ENCODE measurements at regions of chr17 and their contacts with region 1.

Region 1: DNA sequence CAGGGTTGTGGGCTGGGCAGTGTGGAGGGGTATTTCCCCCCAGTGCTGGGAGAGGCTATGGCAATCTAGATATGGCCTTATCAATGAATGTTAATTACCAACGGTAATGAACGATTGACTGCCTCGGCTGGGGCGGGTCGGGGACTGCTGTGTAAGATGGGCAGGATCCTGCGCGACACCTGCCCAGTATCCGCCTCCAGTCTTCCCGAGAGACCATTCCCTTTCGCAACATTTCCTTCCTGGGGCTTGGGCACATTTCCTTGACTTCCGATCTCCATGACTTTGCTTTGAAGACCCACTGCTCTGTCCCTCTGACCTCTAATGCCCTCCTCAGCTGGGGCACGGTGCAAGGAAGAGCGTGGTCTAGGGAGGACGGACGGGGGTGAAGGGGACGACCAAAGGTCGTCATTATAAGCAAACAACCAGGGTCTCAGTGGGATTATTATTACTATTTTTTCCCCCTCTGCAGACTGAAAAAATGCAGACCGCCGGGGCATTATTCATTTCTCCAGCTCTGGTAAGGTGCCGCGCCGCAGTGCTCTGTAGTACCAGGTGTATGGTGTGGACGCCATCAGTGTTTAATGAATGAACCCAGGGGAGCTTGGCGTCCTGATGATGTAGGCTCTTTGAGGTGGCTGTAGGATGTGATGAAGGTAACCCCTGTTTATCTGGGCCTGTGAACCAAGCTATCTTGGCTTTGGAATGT is 506 bp downstream of the ATP5MC1 start:
- DNase-seq: no peak
- ATAC-seq: peak in 1 of 2 donors; percentile 11
- H3K4me3 ChIP-seq: peak overlapping the region; percentile 66 to 88 (median 76)
- H3K27ac ChIP-seq: peak overlapping the region; percentile 85 to 95 (median 92)
- H3K4me1 ChIP-seq: peaks cover 17 to 22% of the 10 kb centered on the region in 2 donors
- H3K27me3 ChIP-seq: no peaks in the 10 kb centered on the region
- CTCF ChIP-seq: no peak
- POLR2A ChIP-seq: no peak

Region 2: GRCh38 chr17:48671697-48672171 is 221.4 kb before region 1 on chr17:
- in situ Hi-C with region 1: loop called in 3 of 4 experiments (anchors 5 to 25 kb)
- intact Hi-C with region 1: no loop called
- DNase-seq: peak; percentile 50 to 61
- ATAC-seq: peak; percentile 84 to 92
- H3K4me3 ChIP-seq: peak overlapping the region; percentile 35 to 57 (median 48)
- H3K27ac ChIP-seq: no peak overlapping the region
- H3K4me1 ChIP-seq: no peaks in the 10 kb centered on the region
- H3K27me3 ChIP-seq: peaks cover 0 to 25% (median 15%) of the 10 kb centered on the region in 3 donors
- CTCF ChIP-seq: peak; percentile 69 to 91 (median 81)
- POLR2A ChIP-seq: no peak

Region 3: DNA sequence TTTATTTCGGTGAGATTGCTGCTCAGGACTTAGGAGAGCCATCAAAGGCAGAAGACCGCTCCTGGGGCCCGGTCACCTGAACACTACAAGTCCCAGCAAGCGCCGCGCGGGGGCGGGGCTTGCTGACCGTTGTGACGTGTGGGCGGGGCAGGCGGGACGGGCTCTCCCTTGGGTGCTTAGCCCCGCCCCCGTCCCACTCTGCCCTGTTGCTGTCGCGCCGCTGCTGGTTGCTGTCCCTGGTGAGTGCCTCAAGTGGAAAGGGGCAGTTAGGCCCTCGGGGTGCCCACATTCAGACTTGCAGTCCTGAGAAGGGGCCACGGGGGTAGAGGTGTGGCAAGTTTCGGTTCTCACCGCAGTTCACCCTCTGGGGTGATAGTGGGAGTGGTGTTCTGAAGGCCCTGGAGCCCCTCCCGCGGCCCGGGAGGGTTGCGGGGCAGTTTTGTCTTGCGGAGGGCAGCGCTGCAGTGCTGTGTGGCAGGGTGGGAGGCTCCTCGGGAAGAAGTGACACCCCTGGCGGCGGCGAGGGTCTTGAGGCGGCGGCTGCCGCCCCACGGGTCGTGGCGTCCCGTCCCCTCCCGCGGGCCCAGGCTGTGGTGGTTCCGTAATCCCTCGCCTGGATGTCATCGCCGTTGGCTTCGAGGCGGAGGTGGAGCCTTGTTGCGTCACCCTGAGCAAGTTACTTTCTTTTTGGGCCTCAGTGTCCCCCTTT is 62.1 kb before region 1 on chr17 and contains the start of gene CALCOCO2:
- in situ Hi-C with region 1: no loop called
- intact Hi-C with region 1: loop called (anchors 1 kb)
- DNase-seq: peak; percentile 93 to 94
- ATAC-seq: peak; percentile 93 to 95
- H3K4me3 ChIP-seq: peak within 1 kb of the TSS; percentile 90 to 95 (median 92)
- H3K27ac ChIP-seq: peak within 1 kb of the TSS; percentile 98 to 99 (median 98)
- H3K4me1 ChIP-seq: peaks cover 43 to 47% of the 10 kb centered on the region in 2 donors
- H3K27me3 ChIP-seq: no peaks in the 10 kb centered on the region
- CTCF ChIP-seq: peak in 4 of 5 experiments; percentile 9 to 13 (median 10)
- POLR2A ChIP-seq: peak; percentile 93 to 96
- total RNA-seq, gene CALCOCO2: 104 to 237 (median 132) TPM

Region 4: DNA sequence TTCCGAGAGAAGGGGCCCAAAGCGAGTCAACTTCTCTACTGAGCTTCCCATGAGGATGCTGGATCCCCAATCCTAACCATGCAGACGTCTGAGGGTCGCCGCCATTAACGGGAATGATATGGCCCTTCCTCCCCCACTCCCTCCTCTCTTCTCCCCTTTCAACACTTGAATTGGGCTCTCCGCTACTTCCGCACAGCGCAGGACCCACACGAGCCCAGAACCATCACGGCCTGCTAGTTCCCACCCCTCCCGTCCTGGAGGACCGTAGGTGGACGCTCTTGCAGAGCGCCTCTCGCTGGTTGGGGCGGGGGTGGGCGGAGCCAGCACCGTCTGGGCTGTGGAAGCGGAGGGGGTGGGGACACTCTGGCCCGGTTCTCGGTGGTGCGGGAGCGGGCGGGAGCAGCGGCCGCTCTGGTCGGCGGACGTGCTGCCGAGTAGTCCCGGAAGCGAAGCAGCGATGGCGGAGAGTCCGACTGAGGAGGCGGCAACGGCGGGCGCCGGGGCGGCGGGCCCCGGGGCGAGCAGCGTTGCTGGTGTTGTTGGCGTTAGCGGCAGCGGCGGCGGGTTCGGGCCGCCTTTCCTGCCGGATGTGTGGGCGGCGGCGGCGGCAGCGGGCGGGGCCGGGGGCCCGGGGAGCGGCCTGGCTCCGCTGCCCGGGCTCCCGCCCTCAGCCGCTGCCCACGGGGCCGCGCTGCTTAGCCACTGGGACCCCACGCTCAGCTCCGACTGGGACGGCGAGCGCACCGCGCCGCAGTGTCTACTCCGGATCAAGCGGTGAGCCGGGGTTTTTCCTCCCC is 15.2 kb after region 1 on chr17 and contains the start of gene UBE2Z:
- in situ Hi-C with region 1: no loop called
- intact Hi-C with region 1: loop called (anchors 1 kb)
- DNase-seq: peak; percentile 88 to 93
- ATAC-seq: peak; percentile 96 to 98
- H3K4me3 ChIP-seq: peak within 1 kb of the TSS; percentile 68 to 82 (median 70)
- H3K27ac ChIP-seq: peak within 1 kb of the TSS; percentile 78 to 86 (median 84)
- H3K4me1 ChIP-seq: peaks cover 19 to 22% of the 10 kb centered on the region in 2 donors
- H3K27me3 ChIP-seq: no peaks in the 10 kb centered on the region
- CTCF ChIP-seq: peak in 2 of 5 experiments; percentile 11 to 23
- POLR2A ChIP-seq: peak; percentile 86 to 88
- total RNA-seq, gene UBE2Z: 32.7 to 41.1 (median 35.4) TPM

Region 5: DNA sequence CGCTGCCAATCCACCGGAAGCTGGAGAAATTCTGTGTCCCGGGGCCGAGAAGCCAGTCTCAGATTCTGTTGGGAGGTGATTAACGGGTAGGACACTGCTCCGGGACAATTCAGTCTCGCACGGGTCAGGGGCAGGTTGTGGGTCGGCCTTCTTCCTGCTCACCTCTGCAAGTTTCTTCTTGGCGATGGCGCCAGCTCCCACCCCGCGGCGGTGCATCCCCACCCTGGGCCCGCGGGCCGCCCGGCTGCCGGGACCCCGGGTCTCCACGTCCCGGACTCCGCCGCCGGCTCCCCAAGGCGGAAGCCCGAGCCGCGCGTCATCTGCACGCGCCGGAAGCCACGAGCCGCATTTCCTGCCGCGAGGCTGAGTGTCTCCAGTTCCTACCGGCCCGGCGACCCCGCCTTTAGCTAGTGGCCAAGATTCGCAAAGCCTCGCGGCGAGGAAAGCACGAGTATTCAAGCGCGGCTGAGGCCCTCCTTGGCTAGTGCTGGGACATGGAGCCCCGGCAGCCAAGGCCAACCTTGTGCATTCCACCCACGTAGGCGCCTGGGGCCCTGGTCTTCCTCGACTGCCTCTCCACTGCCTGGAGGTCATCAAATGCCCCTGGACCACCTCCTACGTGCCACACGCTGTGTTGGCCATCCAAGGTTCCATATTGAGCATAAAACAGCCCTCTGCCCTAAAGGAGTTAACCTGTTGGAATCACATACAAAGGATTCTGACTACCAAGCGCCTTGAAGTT is 51.6 kb after region 1 on chr17 and contains the start of gene SNF8:
- in situ Hi-C with region 1: loop called in 1 of 4 experiments (anchors 10 kb)
- intact Hi-C with region 1: no loop called
- DNase-seq: peak; percentile 65 to 83
- ATAC-seq: peak; percentile 90 to 92
- H3K4me3 ChIP-seq: peak within 1 kb of the TSS; percentile 84 to 95 (median 87)
- H3K27ac ChIP-seq: peak within 1 kb of the TSS; percentile 83 to 88 (median 84)
- H3K4me1 ChIP-seq: peaks cover 10 to 18% of the 10 kb centered on the region in 2 donors
- H3K27me3 ChIP-seq: peaks cover 0 to 4% (median 3%) of the 10 kb centered on the region in 3 donors
- CTCF ChIP-seq: no peak
- POLR2A ChIP-seq: peak; percentile 69 to 79
- total RNA-seq, gene SNF8: 64.9 to 123 (median 76.8) TPM